ENCODE measurements at regions of chr4 and their contacts with region 1.

Region 1: GRCh38 chr4:145936142-145936996 is 2.3 kb downstream of the ZNF827 start:
- DNase-seq: peak in 1 of 2 donors; percentile 78
- H3K4me3 ChIP-seq: peak overlapping the region; percentile 73 to 82
- H3K27ac ChIP-seq: peak overlapping the region; percentile 95 to 99
- H3K4me1 ChIP-seq: peaks cover 0 to 18% of the 10 kb centered on the region in 2 donors
- H3K27me3 ChIP-seq: no peaks in the 10 kb centered on the region
- CTCF ChIP-seq: peak; percentile 7 to 23 (median 17)

Region 2: DNA sequence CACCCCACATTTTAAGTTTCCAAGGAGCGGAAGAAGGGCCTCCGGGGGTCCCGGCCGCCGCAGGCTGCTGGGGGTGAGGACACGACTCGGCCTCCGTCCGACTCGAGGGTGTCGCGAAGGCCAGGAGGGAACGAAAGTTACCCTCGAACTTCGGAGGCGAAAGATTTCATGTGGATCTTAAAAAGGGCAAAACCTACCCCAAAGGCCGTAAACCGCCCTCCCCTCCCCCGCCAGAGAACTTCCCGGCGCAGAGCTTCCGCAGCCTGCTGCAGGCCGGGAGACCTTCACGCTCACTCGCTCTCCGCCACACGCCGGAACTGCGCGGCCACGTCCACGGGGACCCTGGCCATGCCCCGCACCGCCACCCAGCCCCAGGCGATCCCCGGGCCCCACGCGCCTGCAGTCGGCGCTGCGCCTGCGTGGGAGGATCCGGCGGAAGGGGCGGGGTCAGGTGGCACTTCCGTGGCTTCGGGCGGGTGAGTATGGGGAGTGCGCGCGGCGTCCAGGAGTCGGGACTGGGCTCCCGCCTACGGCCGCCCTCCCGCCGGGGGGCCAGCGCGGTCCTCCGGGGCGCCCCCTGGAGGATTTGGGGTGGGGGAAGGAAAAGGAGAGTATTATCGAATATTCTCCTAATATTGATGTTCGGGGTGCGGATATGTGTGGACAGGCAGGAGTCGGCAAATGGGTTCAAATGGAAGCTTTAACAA is 317.3 kb before region 1 on chr4 and contains the start of gene MMAA:
- intact Hi-C with region 1: loop called (anchors 1 kb)
- DNase-seq: peak; percentile 82 to 97
- H3K4me3 ChIP-seq: peak within 1 kb of the TSS; percentile 78 to 89
- H3K27ac ChIP-seq: peak within 1 kb of the TSS; percentile 95 to 98
- H3K4me1 ChIP-seq: peaks cover 0 to 5% of the 10 kb centered on the region in 2 donors
- H3K27me3 ChIP-seq: no peaks in the 10 kb centered on the region
- CTCF ChIP-seq: peak; percentile 44 to 67 (median 67)
- total RNA-seq, gene MMAA: 3.9 TPM

Region 3: GRCh38 chr4:145840162-145840768 is 96.1 kb before region 1 on chr4:
- intact Hi-C with region 1: loop called (anchors 5 kb)
- DNase-seq: no peak
- H3K4me3 ChIP-seq: no peak overlapping the region
- H3K27ac ChIP-seq: no peak overlapping the region
- H3K4me1 ChIP-seq: no peaks in the 10 kb centered on the region
- H3K27me3 ChIP-seq: no peaks in the 10 kb centered on the region
- CTCF ChIP-seq: peak in 2 of 3 experiments; percentile 37 to 55

Region 4: GRCh38 chr4:145887241-145887991 is 49.0 kb before region 1 on chr4:
- intact Hi-C with region 1: loop called (anchors 2 kb)
- DNase-seq: no peak
- H3K4me3 ChIP-seq: peak overlapping the region in 1 of 2 donors; percentile 12
- H3K27ac ChIP-seq: peak overlapping the region; percentile 78 to 81
- H3K4me1 ChIP-seq: peaks cover 5 to 16% of the 10 kb centered on the region in 2 donors
- H3K27me3 ChIP-seq: no peaks in the 10 kb centered on the region
- CTCF ChIP-seq: peak in 1 of 3 experiments; percentile 28

Region 5: DNA sequence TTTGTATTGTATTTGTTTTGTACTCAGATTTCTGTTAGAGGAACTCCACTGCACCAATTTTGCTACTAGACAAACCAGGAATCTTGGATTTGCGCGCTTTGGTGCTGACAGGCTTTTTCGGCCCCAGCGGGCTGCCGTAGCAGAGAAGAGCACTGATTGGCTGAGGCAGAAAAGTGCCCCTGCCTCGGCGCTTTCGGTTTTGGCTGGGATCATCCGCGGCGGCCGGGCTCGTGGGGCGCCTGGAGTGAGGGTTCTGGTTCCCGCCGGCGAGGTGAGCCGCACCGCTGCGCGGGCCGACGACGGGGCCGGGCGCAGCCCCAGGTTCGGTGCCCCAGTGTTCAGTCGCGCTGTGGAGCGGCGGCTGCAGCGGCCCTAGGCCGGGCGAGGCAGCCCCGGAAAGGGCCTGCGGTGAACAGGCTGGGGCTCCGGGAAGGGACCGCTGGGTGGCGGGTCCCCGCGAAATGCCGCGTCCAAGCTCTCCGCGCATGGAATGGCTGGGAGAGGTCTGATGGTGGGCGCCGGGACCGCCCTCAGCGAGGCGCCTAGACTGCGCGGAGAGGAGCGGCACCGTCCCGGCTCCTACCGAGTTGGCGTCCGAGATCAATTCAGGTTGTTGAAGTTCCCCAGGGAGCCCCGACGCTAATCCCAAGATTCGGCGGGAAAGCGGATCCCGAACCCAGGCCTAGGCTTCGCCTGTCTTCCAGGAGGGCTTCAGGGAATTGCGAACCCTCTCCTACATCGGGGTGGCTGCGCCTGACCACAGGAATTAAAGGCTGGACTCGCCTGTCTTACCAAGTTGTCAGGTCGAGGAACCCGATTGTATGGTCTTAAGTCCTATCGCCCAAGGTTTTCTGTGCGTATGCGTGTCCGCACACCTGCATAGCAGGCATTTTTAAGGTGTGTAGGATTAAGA is 239.4 kb after region 1 on chr4 and contains the start of gene LSM6:
- intact Hi-C with region 1: loop called (anchors 5 kb)
- DNase-seq: peak; percentile 39 to 91
- H3K4me3 ChIP-seq: peak within 1 kb of the TSS; percentile 95 to 99
- H3K27ac ChIP-seq: peak within 1 kb of the TSS; percentile 95
- H3K4me1 ChIP-seq: peaks cover 2 to 17% of the 10 kb centered on the region in 2 donors
- H3K27me3 ChIP-seq: no peaks in the 10 kb centered on the region
- CTCF ChIP-seq: peak in 1 of 3 experiments; percentile 21
- total RNA-seq, gene LSM6: 10.7 TPM